ENCODE measurements at regions of chr10 and their contacts with region 1.

Region 1: GRCh38 chr10:44569193-44570091 is 184.5 kb upstream of the CXCL12 start:
- DNase-seq: peak in 1 of 2 donors; percentile 87
- H3K4me3 ChIP-seq: no peak overlapping the region
- H3K27ac ChIP-seq: peak overlapping the region; percentile 19 to 79
- H3K4me1 ChIP-seq: peaks cover 9 to 14% of the 10 kb centered on the region in 2 donors
- H3K27me3 ChIP-seq: no peaks in the 10 kb centered on the region
- CTCF ChIP-seq: no peak

Region 2: GRCh38 chr10:44589181-44589943 is 19.9 kb after region 1 on chr10:
- intact Hi-C with region 1: no loop called
- DNase-seq: no peak
- H3K4me3 ChIP-seq: no peak overlapping the region
- H3K27ac ChIP-seq: no peak overlapping the region
- H3K4me1 ChIP-seq: no peaks in the 10 kb centered on the region
- H3K27me3 ChIP-seq: no peaks in the 10 kb centered on the region
- CTCF ChIP-seq: no peak

Region 3: GRCh38 chr10:44724415-44725174 is 155.2 kb after region 1 on chr10:
- intact Hi-C with region 1: loop called (anchors 5 kb)
- DNase-seq: no peak
- H3K4me3 ChIP-seq: no peak overlapping the region
- H3K27ac ChIP-seq: peak overlapping the region; percentile 22 to 36
- H3K4me1 ChIP-seq: peaks cover 3 to 20% of the 10 kb centered on the region in 2 donors
- H3K27me3 ChIP-seq: no peaks in the 10 kb centered on the region
- CTCF ChIP-seq: no peak

Region 4: GRCh38 chr10:44853148-44853734 is 283.8 kb after region 1 on chr10:
- intact Hi-C with region 1: no loop called
- DNase-seq: no peak
- H3K4me3 ChIP-seq: no peak overlapping the region
- H3K27ac ChIP-seq: no peak overlapping the region
- H3K4me1 ChIP-seq: no peaks in the 10 kb centered on the region
- H3K27me3 ChIP-seq: no peaks in the 10 kb centered on the region
- CTCF ChIP-seq: peak in 1 of 3 experiments; percentile 7

Region 5: GRCh38 chr10:44864637-44865288 is 295.3 kb after region 1 on chr10:
- intact Hi-C with region 1: loop called (anchors 5 kb)
- DNase-seq: peak in 1 of 2 donors; percentile 93
- H3K4me3 ChIP-seq: peak overlapping the region; percentile 51 to 68
- H3K27ac ChIP-seq: peak overlapping the region; percentile 29 to 58
- H3K4me1 ChIP-seq: peaks cover 0 to 14% of the 10 kb centered on the region in 2 donors
- H3K27me3 ChIP-seq: no peaks in the 10 kb centered on the region
- CTCF ChIP-seq: peak; percentile 91 to 99 (median 93)

Region 6: DNA sequence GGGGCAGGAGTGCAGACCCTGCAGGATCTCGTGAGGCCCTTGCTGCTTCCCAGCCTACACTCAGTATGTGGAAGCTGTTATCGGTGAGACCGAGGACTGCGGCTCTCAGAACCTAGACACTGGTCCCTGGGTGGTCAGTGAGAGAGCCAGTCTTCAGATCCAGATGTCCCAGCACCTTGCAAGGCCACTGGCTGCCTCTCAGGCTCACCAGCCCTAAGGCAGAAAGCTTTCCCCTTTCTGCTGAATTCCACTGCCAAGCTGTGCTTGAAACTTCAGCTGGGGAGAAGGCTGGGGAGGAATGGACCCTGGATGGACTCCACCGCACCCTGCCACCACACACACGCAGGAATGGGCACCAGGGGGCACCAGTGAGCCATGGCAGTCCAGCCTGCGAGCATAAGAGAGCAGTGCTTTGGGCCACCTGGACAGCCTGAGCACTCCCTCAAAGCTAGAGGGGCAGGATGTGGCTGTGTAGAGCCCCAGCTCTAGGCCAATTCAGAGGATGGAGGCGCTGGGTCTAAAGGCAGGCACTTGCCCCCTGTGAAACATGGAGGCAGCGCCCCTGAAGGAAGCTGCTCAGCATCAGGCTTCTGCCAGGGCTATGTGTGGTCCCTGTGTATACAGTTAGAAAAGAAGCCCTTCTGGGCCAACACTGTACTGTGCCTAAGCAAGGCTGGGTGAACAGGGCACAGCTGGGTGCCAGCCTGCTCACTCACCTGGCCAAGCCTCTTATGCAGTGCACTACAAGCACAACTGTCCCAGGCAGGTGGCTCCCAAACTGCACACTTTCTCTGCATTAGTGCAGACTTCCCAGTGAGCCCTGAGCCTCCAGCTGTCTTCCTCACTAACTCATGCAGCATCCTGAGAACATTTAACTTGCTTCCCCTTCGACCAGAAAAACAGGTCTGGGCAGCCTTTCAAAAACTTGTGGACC is 363.3 kb after region 1 on chr10:
- intact Hi-C with region 1: no loop called
- DNase-seq: peak; percentile 56 to 96
- H3K4me3 ChIP-seq: no peak overlapping the region
- H3K27ac ChIP-seq: peak overlapping the region in 1 of 2 donors; percentile 7
- H3K4me1 ChIP-seq: peaks cover 4 to 17% of the 10 kb centered on the region in 2 donors
- H3K27me3 ChIP-seq: no peaks in the 10 kb centered on the region
- CTCF ChIP-seq: peak; percentile 91 to 98 (median 97)

Measured in ascending aorta (tissue), 2 donors.